GM13976 (cell line): ENCODE measurements at regions of chr2 and their contacts with region 1.

Region 1: GRCh38 chr2:181058378-181059269 is 78.2 kb downstream of the UBE2E3 start:
- DNase-seq: peak; percentile 22
- CTCF ChIP-seq: peak; percentile 71

Region 2: DNA sequence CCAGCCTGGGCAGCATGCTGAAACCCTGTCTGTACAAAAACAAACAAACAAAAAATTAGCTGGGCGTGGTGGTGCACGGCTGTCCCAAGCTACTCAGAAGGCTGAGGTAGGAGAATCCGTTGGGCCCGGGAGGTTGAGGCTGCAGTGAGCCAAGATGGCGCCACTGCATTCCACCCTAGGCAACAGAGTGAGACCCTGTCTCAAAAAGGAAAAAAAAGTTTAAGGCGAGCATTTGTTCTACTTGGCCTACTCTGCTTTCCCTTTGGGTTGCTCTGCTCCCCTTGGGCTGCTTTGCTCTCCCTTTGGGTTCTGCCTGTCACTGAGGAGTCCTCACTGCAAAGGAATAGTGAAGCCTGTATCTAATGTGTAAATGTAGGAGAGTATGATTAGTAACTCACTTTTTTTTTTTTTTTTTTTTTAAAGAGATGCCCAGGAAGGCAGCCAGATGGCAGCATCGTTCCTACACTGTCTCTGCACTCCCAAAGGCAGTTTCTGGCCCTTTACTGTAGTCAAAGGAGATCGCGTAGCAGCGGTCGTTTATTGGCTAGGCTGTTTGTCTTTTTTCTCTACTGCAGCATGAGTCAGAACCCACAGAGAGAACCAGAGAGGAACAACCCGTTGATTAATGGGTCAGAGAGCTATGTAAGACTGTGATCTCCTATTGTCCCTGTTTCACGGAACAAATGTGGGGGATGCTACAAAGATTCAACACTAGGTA is 933.2 kb before region 1 on chr2:
- in situ Hi-C with region 1: loop called (anchors 5 kb)
- DNase-seq: peak; percentile 26
- CTCF ChIP-seq: peak; percentile 33

Region 3: GRCh38 chr2:180240774-180241173 is 817.9 kb before region 1 on chr2:
- in situ Hi-C with region 1: loop called (anchors 25 kb)
- DNase-seq: no peak
- CTCF ChIP-seq: no peak

Region 4: DNA sequence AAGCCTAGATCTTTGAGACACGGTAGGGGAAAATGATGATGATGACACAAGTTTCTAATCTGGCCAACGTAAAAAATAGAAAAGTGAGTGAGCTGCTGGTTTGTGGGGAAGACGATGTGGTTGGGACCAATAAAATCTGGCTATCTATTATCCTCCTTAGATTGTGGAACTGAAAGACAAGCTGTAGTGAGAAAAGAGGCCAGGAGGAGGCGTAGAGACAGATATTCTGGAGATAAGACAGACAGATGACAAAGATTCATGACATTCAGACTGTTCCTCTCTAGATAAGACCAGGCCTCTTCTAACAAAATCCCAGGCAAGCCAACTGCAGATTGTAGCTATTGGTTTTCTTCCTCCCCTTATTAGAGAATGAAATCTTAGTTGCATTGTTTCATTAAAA is 454.5 kb before region 1 on chr2:
- in situ Hi-C with region 1: loop called (anchors 25 kb)
- DNase-seq: no peak
- CTCF ChIP-seq: peak; percentile 20